ENCODE measurements at regions of chr5 and their contacts with region 1.

Region 1: DNA sequence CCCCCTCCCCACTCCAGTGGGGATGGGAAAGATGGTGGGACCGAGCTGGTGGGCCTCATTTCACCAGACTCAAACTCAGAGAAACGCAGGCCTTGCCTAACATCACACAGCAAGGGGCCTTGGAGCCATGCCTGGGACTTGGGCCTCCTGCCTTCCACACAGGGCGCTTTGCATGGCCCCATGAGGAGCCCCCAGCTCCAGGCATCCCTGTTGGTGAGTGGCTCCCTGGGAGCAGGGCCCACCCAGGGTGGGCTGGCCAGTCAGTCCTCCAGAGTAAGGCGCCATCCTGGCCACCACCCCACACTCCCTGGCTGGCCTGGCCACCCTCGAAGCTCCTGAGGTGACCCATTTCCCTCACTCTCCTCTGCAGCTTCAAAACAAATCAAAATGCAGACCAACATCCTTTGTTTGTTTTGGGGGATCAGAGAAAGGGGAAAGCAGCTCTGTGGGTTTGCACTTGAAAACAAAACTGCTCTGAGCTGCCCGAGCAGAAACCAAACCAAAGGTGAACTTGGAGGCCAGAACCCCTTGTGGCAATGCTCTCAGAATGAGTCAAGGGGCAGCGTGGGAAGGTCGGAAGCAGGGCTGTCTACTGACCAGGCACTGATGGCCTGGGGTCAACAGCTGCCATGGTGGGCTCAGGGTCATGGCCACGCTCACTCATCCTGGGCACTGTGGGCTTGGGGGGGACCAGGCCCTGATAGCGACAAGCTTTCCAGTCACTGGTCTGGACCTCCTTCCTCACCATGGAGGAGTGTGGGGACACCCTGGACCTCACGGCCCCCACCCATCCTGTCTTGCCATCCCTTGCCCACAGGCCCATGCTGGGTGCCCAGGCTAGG is 37.0 kb upstream of the VDAC1 start:
- DNase-seq: no peak
- ATAC-seq: no peak
- H3K4me3 ChIP-seq: no peak overlapping the region
- H3K27ac ChIP-seq: no peak overlapping the region
- H3K4me1 ChIP-seq: no peaks in the 10 kb centered on the region
- H3K27me3 ChIP-seq: no peaks in the 10 kb centered on the region
- CTCF ChIP-seq: no peak

Region 2: DNA sequence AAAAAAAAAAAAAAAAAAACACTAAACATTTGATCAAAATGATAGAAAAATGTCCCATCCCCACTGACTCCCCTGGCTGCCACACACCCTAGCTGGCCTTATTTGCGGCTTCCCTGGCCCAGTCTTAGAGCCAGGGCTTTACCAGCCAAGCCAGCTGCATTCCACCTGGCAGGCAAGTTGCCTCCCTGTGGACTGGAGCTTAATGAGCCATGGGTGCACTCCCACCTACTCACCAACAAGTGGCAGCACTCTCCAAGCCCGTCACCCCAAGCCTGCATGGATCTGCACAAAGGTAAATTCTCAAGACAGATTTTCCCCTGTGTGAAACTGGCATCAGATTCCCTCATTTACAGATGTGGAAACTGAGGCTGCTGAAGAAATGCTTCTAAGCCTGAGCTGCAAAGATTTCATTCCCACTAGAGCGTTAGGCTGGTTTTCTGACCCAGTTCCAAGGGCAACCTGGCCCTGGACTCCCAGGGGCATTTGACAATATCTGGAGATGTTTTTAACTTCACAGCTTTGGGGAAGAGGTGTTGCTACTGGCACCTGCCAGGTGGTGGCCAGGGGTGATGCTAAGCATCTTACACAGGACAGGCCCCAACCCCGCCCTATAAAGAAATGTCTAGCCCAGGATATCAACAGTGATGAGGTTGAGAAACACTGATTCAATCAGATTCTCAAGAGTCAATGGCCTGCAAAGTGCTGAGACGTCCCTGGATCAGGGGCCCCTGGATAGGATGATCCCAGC is 15.1 kb before region 1 on chr5:
- CTCF ChIA-PET with region 1: interaction called, 8 read pairs
- POLR2A ChIA-PET with region 1: no interaction called
- intact Hi-C with region 1: loop called (anchors 1 kb)
- DNase-seq: peak; percentile 73
- ATAC-seq: peak; percentile 95
- H3K4me3 ChIP-seq: no peak overlapping the region
- H3K27ac ChIP-seq: no peak overlapping the region
- H3K4me1 ChIP-seq: peaks cover 13% of the 10 kb centered on the region
- H3K27me3 ChIP-seq: no peaks in the 10 kb centered on the region
- CTCF ChIP-seq: peak; percentile 67

Region 3: DNA sequence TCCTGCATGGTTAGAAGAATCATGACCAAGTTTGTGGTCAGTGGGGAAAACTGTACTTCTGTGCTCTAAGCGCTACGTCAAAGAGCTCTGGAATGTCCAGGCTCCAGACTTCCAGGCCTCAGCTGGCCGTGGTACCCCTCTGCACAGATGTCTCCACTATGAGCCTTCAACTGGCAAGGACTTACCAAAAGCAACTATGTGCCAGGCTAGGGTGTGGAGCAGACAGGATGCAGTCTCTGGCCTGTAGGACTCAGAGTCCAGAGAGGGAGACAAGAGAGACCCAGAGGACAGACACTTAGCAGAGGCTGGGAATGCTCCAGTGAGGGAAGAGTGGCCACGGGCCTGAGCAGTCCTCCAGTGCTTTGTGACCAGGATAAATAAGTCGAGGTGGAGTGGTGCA is 41.7 kb after region 1 on chr5:
- CTCF ChIA-PET with region 1: no interaction called
- POLR2A ChIA-PET with region 1: no interaction called
- intact Hi-C with region 1: no loop called
- DNase-seq: no peak
- ATAC-seq: no peak
- H3K4me3 ChIP-seq: no peak overlapping the region
- H3K27ac ChIP-seq: no peak overlapping the region
- H3K4me1 ChIP-seq: no peaks in the 10 kb centered on the region; the same call in 1 of the 2 replicates
- H3K27me3 ChIP-seq: no peaks in the 10 kb centered on the region
- CTCF ChIP-seq: no peak

Region 4: GRCh38 chr5:134101686-134102439 is 60.1 kb after region 1 on chr5:
- CTCF ChIA-PET with region 1: interaction called, 6 read pairs
- POLR2A ChIA-PET with region 1: no interaction called
- intact Hi-C with region 1: loop called (anchors 5 kb)
- DNase-seq: peak; percentile 62
- ATAC-seq: peak; percentile 91
- H3K4me3 ChIP-seq: no peak overlapping the region
- H3K27ac ChIP-seq: no peak overlapping the region
- H3K4me1 ChIP-seq: peaks cover 5% of the 10 kb centered on the region; the same call in 1 of the 2 replicates
- H3K27me3 ChIP-seq: no peaks in the 10 kb centered on the region
- CTCF ChIP-seq: peak; percentile 68

Region 5: DNA sequence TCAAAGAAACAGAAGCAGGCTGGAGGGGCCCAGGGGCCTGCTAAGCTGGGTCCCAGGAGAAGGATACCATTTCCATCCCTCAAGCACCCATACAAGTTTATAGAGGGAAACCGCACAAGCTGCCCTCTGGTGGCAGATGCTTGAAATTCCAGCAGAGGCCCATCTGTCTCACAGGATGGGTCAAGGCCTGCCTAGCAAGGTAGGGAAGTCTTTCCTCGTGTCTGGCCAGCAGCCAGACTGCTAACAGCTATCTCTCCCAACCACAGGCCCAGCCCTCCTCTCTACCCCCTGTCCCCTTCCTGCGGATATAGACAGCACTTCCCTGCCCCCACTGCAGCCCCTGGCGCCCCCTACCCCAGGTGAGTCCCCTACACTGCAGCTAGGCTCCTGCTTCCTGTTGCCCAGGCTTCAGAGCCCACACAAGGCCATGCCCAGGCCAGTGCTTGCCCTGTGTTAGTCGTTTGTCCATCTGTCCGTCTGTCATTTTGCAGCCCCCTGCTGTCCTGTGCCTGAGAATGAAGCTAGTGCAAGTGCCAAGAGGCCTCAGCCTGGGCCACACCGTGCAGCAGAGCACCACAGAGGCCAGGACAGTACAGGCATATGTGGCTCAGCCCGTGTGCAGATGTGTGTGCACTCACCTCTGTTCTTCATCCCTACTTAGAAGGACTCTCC is 98.9 kb after region 1 on chr5:
- CTCF ChIA-PET with region 1: interaction called, 21 read pairs
- POLR2A ChIA-PET with region 1: no interaction called
- intact Hi-C with region 1: loop called (anchors 1 kb)
- DNase-seq: peak; percentile 88
- ATAC-seq: peak; percentile 77
- H3K4me3 ChIP-seq: no peak overlapping the region
- H3K27ac ChIP-seq: 0 out of 2 replicates have a peak overlapping the region, but pooled peaks have one; percentile 16
- H3K4me1 ChIP-seq: peaks cover 22% of the 10 kb centered on the region
- H3K27me3 ChIP-seq: no peaks in the 10 kb centered on the region
- CTCF ChIP-seq: peak; percentile 68

Region 6: DNA sequence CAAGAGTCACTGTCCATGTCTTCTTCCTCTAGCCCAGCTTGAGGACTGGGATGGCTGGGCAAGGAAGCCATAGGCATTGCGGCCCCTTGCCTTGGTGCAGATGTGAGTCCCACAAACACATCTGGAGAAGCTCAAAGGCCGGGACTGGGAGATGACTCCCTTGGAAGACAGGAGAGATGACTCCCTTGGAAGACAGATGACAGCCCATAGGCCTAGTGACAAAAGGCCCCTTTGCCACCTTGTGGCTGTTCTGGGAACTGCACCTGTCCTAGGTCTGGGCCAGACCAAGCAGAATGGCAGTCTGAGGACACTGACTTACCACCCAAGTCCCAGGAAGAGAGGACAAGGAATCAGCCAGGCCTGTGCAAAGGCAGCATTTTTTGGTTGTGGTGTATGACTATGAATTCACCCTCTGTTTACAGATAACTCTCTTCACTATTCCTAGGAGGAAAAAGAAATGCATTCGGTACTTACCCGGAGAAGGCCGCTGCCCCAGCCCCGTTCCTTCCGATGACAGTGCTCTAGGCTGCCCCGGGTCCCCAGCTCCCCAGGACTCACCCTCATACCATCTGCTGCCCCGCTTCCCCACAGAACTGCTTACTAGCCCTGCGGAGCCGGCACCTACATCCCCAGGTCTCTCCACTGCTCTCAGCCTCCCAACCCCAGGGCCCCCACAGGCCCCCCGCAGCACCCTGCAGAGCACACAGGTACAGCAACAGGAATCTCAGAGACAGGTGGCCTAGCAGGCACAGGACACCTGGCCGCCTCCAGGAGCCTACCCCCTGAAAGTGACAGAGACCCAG is 104.2 kb after region 1 on chr5:
- CTCF ChIA-PET with region 1: interaction called, 21 read pairs
- POLR2A ChIA-PET with region 1: no interaction called
- intact Hi-C with region 1: loop called (anchors 1 kb)
- DNase-seq: peak; percentile 82
- ATAC-seq: peak; percentile 84
- H3K4me3 ChIP-seq: no peak overlapping the region
- H3K27ac ChIP-seq: no peak overlapping the region
- H3K4me1 ChIP-seq: peaks cover 1% of the 10 kb centered on the region; the same call in 1 of the 2 replicates
- H3K27me3 ChIP-seq: no peaks in the 10 kb centered on the region
- CTCF ChIP-seq: peak; percentile 73